ENCODE measurements at regions of chr12 and their contacts with region 1.

Region 1: GRCh38 chr12:89671469-89671868 is 37.2 kb downstream of the ATP2B1 start:
- DNase-seq: peak; percentile 24
- H3K4me3 ChIP-seq: no peak overlapping the region
- H3K27me3 ChIP-seq: no peaks in the 10 kb centered on the region
- CTCF ChIP-seq: no peak

Region 2: DNA sequence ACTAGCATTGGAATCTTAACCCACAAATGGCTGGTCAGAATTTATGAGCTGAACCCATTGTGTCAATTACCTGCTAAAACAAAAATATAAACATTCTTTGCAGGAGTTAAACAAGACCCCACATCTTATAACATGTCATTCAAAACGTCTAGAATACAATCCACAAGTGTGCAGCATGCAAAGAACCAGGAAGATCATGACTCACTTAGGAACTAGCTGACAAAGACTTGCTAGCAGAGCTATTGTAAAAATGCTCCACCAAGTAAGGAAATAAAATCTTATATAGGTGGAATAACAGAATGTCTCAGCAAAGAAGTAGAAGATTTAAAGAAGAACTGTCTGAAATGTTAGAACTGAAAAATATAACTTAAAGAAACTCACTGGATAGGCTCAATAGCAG is 119.1 kb before region 1 on chr12:
- CTCF ChIA-PET with region 1: no interaction called
- POLR2A ChIA-PET with region 1: interaction called, 13 read pairs
- DNase-seq: no peak
- H3K4me3 ChIP-seq: no peak overlapping the region
- H3K27me3 ChIP-seq: no peaks in the 10 kb centered on the region
- CTCF ChIP-seq: no peak